Sigmoid colon (tissue), 7 donors: ENCODE measurements at regions of chr9 and their contacts with region 1.

Region 1: GRCh38 chr9:109717342-109717741 is 62.7 kb upstream of the PALM2AKAP2 start:
- DNase-seq: no peak
- H3K4me3 ChIP-seq: no peak overlapping the region
- H3K27ac ChIP-seq: no peak overlapping the region
- H3K4me1 ChIP-seq: no peaks in the 10 kb centered on the region
- H3K27me3 ChIP-seq: no peaks in the 10 kb centered on the region
- CTCF ChIP-seq: no peak
- EP300 ChIP-seq: no peak
- POLR2A ChIP-seq: no peak

Region 2: GRCh38 chr9:109556061-109556460 is 161.3 kb before region 1 on chr9:
- intact Hi-C with region 1: no loop called
- DNase-seq: no peak
- H3K4me3 ChIP-seq: no peak overlapping the region
- H3K27ac ChIP-seq: no peak overlapping the region
- H3K4me1 ChIP-seq: no peaks in the 10 kb centered on the region
- H3K27me3 ChIP-seq: no peaks in the 10 kb centered on the region
- CTCF ChIP-seq: no peak
- EP300 ChIP-seq: no peak
- POLR2A ChIP-seq: no peak

Region 3: DNA sequence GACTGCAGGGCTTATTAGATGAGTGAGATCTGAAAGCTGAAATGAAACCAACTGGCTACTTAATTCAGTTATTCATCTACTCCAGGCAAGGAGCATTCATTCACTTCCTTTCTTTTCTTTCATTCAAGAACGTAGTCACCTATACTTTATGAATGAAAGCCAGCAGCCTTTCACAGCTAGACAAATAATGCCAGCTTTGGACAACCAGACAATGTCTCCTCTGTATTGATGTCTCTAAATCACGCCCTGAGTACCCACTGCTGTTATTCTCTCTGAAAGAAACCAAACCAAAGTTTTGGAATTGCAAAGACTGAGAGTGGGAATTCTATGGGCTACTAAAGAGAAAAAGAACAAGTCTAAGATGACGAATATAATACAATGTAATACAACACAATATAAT is 98.0 kb before region 1 on chr9:
- intact Hi-C with region 1: no loop called
- DNase-seq: no peak
- H3K4me3 ChIP-seq: no peak overlapping the region
- H3K27ac ChIP-seq: no peak overlapping the region
- H3K4me1 ChIP-seq: no peaks in the 10 kb centered on the region
- H3K27me3 ChIP-seq: no peaks in the 10 kb centered on the region
- CTCF ChIP-seq: no peak
- EP300 ChIP-seq: no peak
- POLR2A ChIP-seq: no peak

Region 4: GRCh38 chr9:109755040-109755439 is 37.7 kb after region 1 on chr9:
- intact Hi-C with region 1: loop called (anchors 5 kb)
- DNase-seq: no peak
- H3K4me3 ChIP-seq: no peak overlapping the region
- H3K27ac ChIP-seq: no peak overlapping the region
- H3K4me1 ChIP-seq: peaks cover 0 to 6% (median 0%) of the 10 kb centered on the region in 4 donors
- H3K27me3 ChIP-seq: no peaks in the 10 kb centered on the region
- CTCF ChIP-seq: no peak
- EP300 ChIP-seq: no peak
- POLR2A ChIP-seq: no peak

Region 5: GRCh38 chr9:110143950-110144545 is 426.7 kb after region 1 on chr9:
- intact Hi-C with region 1: no loop called
- DNase-seq: no peak
- H3K4me3 ChIP-seq: no peak overlapping the region
- H3K27ac ChIP-seq: peak overlapping the region in 3 of 4 donors; percentile 24 to 54 (median 48)
- H3K4me1 ChIP-seq: peaks cover 0 to 71% (median 54%) of the 10 kb centered on the region in 4 donors
- H3K27me3 ChIP-seq: no peaks in the 10 kb centered on the region
- CTCF ChIP-seq: no peak
- EP300 ChIP-seq: no peak
- POLR2A ChIP-seq: no peak